Mammary epithelial cell (primary cell): ENCODE measurements at regions of chr6 and their contacts with region 1.

Region 1: GRCh38 chr6:149863697-149864577 is at the start of gene LRP11:
- DNase-seq: peak; percentile 86
- H3K4me3 ChIP-seq: peak within 1 kb of the TSS; percentile 39 to 69 (median 57)
- H3K27ac ChIP-seq: peak within 1 kb of the TSS; percentile 87
- H3K4me1 ChIP-seq: peaks cover 31% of the 10 kb centered on the region
- H3K27me3 ChIP-seq: no peaks in the 10 kb centered on the region
- CTCF ChIP-seq: no peak
- total RNA-seq, gene LRP11: 67.5 to 71.3 TPM

Region 2: DNA sequence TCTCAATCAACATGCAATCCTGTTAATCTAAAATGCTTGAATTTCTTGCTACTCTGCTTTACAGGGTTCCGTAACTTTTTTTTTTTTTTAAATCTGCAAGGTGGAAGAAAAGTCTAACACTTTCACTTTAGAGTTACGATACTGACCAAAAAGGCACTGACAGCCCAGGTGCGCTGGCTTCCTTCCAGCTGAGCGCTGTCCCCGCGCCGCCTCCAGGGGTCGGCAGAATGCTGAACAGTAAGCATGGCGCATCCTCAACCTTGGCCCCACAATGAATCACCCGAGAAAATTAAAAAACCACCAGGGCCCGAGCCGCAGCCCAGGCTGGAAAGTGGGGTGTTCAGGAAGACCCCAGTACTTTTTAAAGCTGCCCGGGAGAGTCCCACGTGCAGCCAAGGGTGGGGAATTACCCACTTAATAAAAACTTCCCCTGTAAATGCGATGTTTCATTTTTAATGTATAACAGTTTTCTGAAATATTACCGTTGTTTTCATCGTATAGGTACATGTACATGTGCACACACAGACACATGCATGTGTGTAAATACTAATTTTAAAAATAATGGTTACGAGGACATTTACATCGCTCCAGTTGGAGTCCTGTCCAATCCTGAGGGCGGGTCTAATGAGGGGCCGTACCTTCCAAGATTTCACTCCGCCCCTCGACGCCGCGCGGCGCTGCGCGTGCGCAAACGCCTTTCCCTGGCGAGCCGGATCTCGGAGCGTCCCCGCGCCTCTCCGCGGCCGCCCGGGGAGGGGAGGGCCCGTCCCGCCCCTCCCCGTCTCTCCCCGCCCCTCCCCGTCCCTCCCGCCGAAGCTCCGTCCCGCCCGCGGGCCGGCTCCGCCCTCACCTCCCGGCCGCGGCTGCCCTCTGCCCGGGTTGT is 298.2 kb before region 1 on chr6 and contains the start of gene GINM1:
- CTCF ChIA-PET with region 1: no interaction called
- dilution Hi-C with region 1: no loop called
- in situ Hi-C with region 1: no loop called
- intact Hi-C with region 1: loop called (anchors 10 kb)
- DNase-seq: peak; percentile 95
- H3K4me3 ChIP-seq: peak within 1 kb of the TSS; percentile 74 to 95 (median 94)
- H3K27ac ChIP-seq: peak within 1 kb of the TSS; percentile 76
- H3K4me1 ChIP-seq: peaks cover 22% of the 10 kb centered on the region
- H3K27me3 ChIP-seq: no peaks in the 10 kb centered on the region
- CTCF ChIP-seq: peak; percentile 72 to 87
- total RNA-seq, gene GINM1: 33.0 to 34.0 TPM

Region 3: GRCh38 chr6:149806127-149806526 is 57.8 kb before region 1 on chr6:
- CTCF ChIA-PET with region 1: no interaction called
- dilution Hi-C with region 1: no loop called
- in situ Hi-C with region 1: no loop called
- intact Hi-C with region 1: no loop called
- DNase-seq: peak; percentile 10
- H3K4me3 ChIP-seq: no peak overlapping the region
- H3K27ac ChIP-seq: no peak overlapping the region
- H3K4me1 ChIP-seq: no peaks in the 10 kb centered on the region
- H3K27me3 ChIP-seq: no peaks in the 10 kb centered on the region
- CTCF ChIP-seq: no peak

Region 4: GRCh38 chr6:149834513-149835481 is 29.1 kb before region 1 on chr6:
- CTCF ChIA-PET with region 1: no interaction called
- dilution Hi-C with region 1: no loop called
- in situ Hi-C with region 1: no loop called
- intact Hi-C with region 1: loop called (anchors 1 kb)
- DNase-seq: peak; percentile 84
- H3K4me3 ChIP-seq: no peak overlapping the region
- H3K27ac ChIP-seq: peak overlapping the region; percentile 49
- H3K4me1 ChIP-seq: peaks cover 21% of the 10 kb centered on the region
- H3K27me3 ChIP-seq: no peaks in the 10 kb centered on the region
- CTCF ChIP-seq: peak; percentile 86 to 87

Region 5: GRCh38 chr6:149846321-149846720 is 17.6 kb before region 1 on chr6:
- CTCF ChIA-PET with region 1: no interaction called
- dilution Hi-C with region 1: no loop called
- in situ Hi-C with region 1: no loop called
- intact Hi-C with region 1: loop called (anchors 1 kb)
- DNase-seq: peak; percentile 74
- H3K4me3 ChIP-seq: no peak overlapping the region
- H3K27ac ChIP-seq: peak overlapping the region; percentile 12
- H3K4me1 ChIP-seq: peaks cover 34% of the 10 kb centered on the region
- H3K27me3 ChIP-seq: no peaks in the 10 kb centered on the region
- CTCF ChIP-seq: no peak

Region 6: DNA sequence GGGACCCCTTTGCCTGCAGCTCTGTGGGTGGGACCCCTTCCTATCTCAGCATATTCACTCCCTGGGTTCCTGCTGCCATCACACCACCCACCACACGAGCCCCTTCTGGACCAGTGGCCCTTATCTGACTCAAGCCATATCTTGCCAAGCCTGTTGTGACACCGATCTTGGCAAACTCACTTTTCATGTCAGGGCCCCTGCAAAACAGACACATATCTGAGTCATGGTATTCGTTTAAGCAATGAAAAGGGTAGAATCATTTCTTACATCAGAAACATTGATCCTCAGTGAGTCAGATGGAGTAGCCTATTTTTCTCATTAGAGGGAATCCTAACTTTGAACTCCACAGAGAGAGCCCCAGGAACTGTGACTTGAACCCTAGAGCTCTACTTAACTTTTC is 23.4 kb after region 1 on chr6:
- CTCF ChIA-PET with region 1: no interaction called
- dilution Hi-C with region 1: no loop called
- in situ Hi-C with region 1: no loop called
- intact Hi-C with region 1: loop called (anchors 1 kb)
- DNase-seq: peak; percentile 94
- H3K4me3 ChIP-seq: no peak overlapping the region
- H3K27ac ChIP-seq: peak overlapping the region; percentile 82
- H3K4me1 ChIP-seq: peaks cover 69% of the 10 kb centered on the region
- H3K27me3 ChIP-seq: no peaks in the 10 kb centered on the region
- CTCF ChIP-seq: no peak

Region 7: DNA sequence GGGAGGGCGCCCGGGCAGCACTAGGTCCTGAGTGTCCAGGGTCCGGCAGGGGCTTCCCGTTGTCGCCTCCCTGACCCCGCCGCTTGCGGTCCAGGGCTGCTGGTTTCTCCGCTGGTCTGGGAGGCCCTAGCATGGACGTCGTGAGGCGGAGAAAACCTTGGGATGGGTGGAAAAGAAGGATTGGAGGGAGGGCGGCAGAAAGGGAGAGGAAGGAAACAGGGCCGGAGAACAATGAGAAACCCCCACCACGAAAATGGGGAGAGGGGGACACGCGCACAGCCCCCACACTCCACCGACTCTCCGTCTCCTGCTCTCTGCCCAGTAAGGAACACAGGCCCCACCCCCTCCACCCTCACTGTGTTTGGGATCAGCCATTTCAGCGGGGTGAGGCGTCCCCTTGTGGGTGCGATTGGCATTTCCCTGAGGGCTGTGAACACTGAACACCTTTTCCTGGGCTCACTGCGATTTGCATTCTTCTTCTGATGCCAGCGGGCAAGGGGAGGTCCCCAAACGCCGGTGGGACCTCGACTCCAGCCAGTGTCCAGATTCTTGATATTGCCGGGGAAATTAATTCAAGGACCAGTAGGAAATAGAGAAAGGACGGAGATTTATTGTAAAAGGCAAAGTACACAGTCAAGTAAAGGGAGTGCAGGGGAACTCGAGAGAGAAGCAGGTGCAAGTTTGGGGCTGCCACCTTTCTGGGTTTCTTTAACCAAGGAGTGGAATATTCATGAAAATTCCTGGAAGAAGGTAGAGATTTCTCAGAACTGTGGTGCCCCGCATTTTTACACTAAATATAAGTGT is 62.2 kb after region 1 on chr6:
- CTCF ChIA-PET with region 1: no interaction called
- dilution Hi-C with region 1: no loop called
- in situ Hi-C with region 1: no loop called
- intact Hi-C with region 1: loop called (anchors 1 kb)
- DNase-seq: peak; percentile 75
- H3K4me3 ChIP-seq: peak overlapping the region; percentile 14 to 44 (median 35)
- H3K27ac ChIP-seq: no peak overlapping the region
- H3K4me1 ChIP-seq: peaks cover 18% of the 10 kb centered on the region
- H3K27me3 ChIP-seq: no peaks in the 10 kb centered on the region
- CTCF ChIP-seq: peak; percentile 91 to 97